Activated T-helper 1 cell treated with anti-CD3 and anti-CD28 coated beads, Interleukin-12 subunit alpha, Interleukin-12 subunit beta, Interleukin-2, Interleukin-4 antibody, amounts not matched to agents 30 ng/mL and 10 ng/mL and 1 ng/mL, durations not matched to agents 14 hours and 24 hours and 36 hours (primary cell): ENCODE measurements at regions of chr9 and their contacts with region 1.

Region 1: GRCh38 chr9:136944519-136945279 is at the starts of genes C8G and FBXW5:
- DNase-seq: peak; percentile 97
- H3K4me3 Mint-ChIP-seq: peak within 1 kb of the TSS; percentile 83
- H3K27ac Mint-ChIP-seq: peak within 1 kb of the TSS; percentile 86
- H3K4me1 Mint-ChIP-seq: peaks cover 5% of the 10 kb centered on the region
- H3K27me3 Mint-ChIP-seq: no peaks in the 10 kb centered on the region
- total RNA-seq, gene C8G: 0.56 and 1.5 TPM in 2 replicates
- total RNA-seq, gene FBXW5: 92.5 and 96.2 TPM in 2 replicates

Region 2: DNA sequence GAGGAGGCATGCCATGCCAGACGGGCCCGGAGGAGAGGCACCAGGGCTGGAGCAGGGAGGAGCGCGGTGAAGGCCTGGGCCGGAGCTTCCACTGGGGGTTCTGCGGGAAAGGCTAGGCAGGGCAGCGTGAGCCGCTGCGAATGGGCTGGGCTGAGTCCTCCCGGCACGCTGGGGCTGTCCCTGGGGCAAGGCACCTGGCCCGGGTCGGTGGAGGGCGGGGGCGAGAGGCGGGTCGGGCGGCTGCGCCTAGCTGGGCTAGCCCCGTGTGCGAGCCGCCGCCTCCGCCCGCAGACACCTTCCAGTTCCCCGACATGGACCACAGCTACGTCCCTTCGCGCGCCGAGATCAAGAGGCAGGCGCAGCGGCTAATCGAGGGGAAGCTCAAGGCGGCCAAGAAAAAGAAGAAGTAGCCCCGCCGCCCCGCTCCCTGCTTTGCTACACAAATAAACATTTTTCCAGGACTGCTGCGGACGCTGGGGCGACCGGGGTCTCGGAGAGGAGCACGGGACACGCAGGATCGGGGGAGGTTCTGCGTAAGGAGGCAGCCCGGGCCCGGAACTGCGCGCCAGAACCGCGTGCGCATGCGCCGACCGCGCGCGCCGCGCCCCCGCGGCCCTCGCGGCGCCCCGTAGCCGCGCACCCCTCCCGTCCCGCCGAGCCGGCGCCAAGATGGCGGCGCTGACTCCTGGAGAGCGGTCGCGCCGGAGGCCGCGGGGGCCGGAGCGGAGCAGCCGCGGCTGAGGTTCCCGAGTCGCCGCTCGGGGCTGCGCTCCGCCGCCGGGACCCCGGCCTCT is 137.2 kb before region 1 on chr9 and contains the start of gene RABL6:
- intact Hi-C with region 1: loop called (anchors 1 kb)
- DNase-seq: peak; percentile 82
- H3K4me3 Mint-ChIP-seq: peak within 1 kb of the TSS; percentile 85
- H3K27ac Mint-ChIP-seq: peak within 1 kb of the TSS; percentile 90
- H3K4me1 Mint-ChIP-seq: peaks cover 28% of the 10 kb centered on the region
- H3K27me3 Mint-ChIP-seq: peaks cover 4% of the 10 kb centered on the region
- total RNA-seq, gene RABL6: 109 and 114 TPM in 2 replicates

Region 3: GRCh38 chr9:136885950-136886578 is 58.6 kb before region 1 on chr9 and contains the start of gene TRAF2:
- intact Hi-C with region 1: loop called (anchors 1 kb)
- DNase-seq: peak; percentile 99
- H3K4me3 Mint-ChIP-seq: peak within 1 kb of the TSS; percentile 98
- H3K27ac Mint-ChIP-seq: peak within 1 kb of the TSS; percentile 93
- H3K4me1 Mint-ChIP-seq: peaks cover 44% of the 10 kb centered on the region
- H3K27me3 Mint-ChIP-seq: no peaks in the 10 kb centered on the region
- total RNA-seq, gene TRAF2: 67.4 and 76.3 TPM in 2 replicates

Region 4: GRCh38 chr9:136902259-136902821 is 42.4 kb before region 1 on chr9:
- intact Hi-C with region 1: loop called (anchors 1 kb)
- DNase-seq: peak; percentile 88
- H3K4me3 Mint-ChIP-seq: peak overlapping the region; percentile 80
- H3K27ac Mint-ChIP-seq: peak overlapping the region; percentile 99
- H3K4me1 Mint-ChIP-seq: peaks cover 63% of the 10 kb centered on the region
- H3K27me3 Mint-ChIP-seq: no peaks in the 10 kb centered on the region

Region 5: GRCh38 chr9:136978073-136978864 is 33.6 kb after region 1 on chr9:
- intact Hi-C with region 1: loop called (anchors 1 kb)
- DNase-seq: peak; percentile 69
- H3K4me3 Mint-ChIP-seq: no peak overlapping the region
- H3K27ac Mint-ChIP-seq: no peak overlapping the region
- H3K4me1 Mint-ChIP-seq: peaks cover 6% of the 10 kb centered on the region
- H3K27me3 Mint-ChIP-seq: peaks cover 9% of the 10 kb centered on the region

Region 6: GRCh38 chr9:137000177-137000883 is 55.6 kb after region 1 on chr9:
- intact Hi-C with region 1: no loop called
- DNase-seq: peak; percentile 22
- H3K4me3 Mint-ChIP-seq: peak overlapping the region; percentile 32
- H3K27ac Mint-ChIP-seq: peak overlapping the region; percentile 72
- H3K4me1 Mint-ChIP-seq: peaks cover 26% of the 10 kb centered on the region
- H3K27me3 Mint-ChIP-seq: peaks cover 13% of the 10 kb centered on the region

Region 7: DNA sequence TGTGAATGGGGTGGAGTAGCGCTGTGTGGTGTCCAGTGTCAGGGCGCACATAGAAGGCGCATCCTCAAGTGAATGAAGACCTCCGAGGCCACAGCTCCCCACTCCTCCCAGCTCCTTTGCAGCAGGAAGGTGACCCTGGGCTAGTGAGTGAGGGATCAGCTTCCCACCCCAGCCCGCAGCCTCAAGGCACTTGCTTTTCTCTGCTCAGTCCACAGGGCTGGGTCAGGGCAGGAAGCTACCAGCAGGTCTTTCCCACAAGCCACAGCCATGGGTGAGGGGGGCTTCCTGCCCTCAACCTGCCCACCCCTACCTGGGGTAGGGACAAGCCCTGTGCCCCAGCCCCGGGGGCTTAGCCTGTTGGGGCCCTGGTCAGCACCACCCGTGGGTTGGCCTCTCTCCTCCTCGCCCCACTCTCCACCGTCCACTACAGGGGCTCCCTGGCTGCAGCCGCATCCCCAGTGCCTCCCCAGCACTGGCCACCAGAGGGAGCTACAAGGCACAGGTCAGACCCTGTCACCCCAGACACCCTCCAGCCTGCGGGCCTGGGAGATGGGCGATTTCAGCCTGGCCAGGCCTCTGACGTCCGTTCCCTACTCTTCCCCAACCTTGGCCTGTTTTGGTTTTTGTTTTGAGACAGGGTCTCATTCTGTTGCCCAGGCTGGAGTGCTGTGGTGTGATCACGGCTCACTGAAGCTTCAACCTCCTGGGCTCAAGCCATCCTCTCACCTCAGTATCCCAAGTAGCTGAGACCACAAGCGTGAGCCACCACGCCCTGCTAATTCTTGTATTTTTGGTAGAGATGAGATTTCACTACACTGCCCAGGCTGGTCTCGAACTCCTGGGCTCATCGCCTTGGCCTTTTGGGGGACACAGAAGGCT is 84.6 kb after region 1 on chr9:
- intact Hi-C with region 1: loop called (anchors 5 kb)
- DNase-seq: peak; percentile 63
- H3K4me3 Mint-ChIP-seq: peak overlapping the region; percentile 80
- H3K27ac Mint-ChIP-seq: peak overlapping the region; percentile 67
- H3K4me1 Mint-ChIP-seq: peaks cover 30% of the 10 kb centered on the region
- H3K27me3 Mint-ChIP-seq: no peaks in the 10 kb centered on the region